PC-3 (cell line): ENCODE measurements at regions of chr12 and their contacts with region 1.

Region 1: DNA sequence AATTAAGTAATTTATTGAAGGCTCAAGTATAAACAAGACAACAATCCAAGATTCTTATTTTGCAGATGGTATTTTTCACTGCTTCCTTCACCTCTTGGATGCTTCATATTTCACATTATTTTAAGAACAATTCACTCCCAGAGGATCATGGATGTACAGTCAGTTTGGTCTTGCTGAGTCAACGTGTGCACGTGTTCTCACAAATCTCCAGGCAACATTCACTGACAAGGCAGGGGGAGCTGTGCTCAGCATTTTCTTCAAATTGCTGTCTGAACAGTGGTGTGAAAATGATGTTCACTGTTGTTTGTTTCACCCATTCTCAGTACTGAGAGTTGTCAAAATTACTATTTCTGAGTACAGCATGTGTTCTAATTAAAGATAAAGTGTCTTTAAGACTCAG is 118.3 kb upstream of the SLC38A4 start:
- DNase-seq: peak; percentile 64
- ATAC-seq: no peak
- H3K4me3 ChIP-seq: no peak overlapping the region
- H3K27ac ChIP-seq: no peak overlapping the region
- H3K4me1 ChIP-seq: peaks cover 50% of the 10 kb centered on the region
- H3K27me3 ChIP-seq: no peaks in the 10 kb centered on the region
- CTCF ChIP-seq: peak; percentile 47

Region 2: GRCh38 chr12:46983393-46984266 is 39.5 kb after region 1 on chr12:
- CTCF ChIA-PET with region 1: interaction called, 9 read pairs
- POLR2A ChIA-PET with region 1: no interaction called
- intact Hi-C with region 1: loop called (anchors 2 kb)
- DNase-seq: peak; percentile 86
- ATAC-seq: peak; percentile 93
- H3K4me3 ChIP-seq: no peak overlapping the region
- H3K27ac ChIP-seq: no peak overlapping the region
- H3K4me1 ChIP-seq: peaks cover 7% of the 10 kb centered on the region; the same call in 1 of the 2 replicates
- H3K27me3 ChIP-seq: no peaks in the 10 kb centered on the region
- CTCF ChIP-seq: peak; percentile 94

Region 3: GRCh38 chr12:48861111-48861510 is 1917.0 kb after region 1 on chr12:
- CTCF ChIA-PET with region 1: no interaction called
- POLR2A ChIA-PET with region 1: no interaction called
- intact Hi-C with region 1: no loop called
- DNase-seq: peak; percentile 11
- ATAC-seq: no peak
- H3K4me3 ChIP-seq: no peak overlapping the region
- H3K27ac ChIP-seq: no peak overlapping the region
- H3K4me1 ChIP-seq: peaks cover 10% of the 10 kb centered on the region
- H3K27me3 ChIP-seq: no peaks in the 10 kb centered on the region
- CTCF ChIP-seq: no peak